ENCODE measurements at regions of chr1 and their contacts with region 1.

Region 1: DNA sequence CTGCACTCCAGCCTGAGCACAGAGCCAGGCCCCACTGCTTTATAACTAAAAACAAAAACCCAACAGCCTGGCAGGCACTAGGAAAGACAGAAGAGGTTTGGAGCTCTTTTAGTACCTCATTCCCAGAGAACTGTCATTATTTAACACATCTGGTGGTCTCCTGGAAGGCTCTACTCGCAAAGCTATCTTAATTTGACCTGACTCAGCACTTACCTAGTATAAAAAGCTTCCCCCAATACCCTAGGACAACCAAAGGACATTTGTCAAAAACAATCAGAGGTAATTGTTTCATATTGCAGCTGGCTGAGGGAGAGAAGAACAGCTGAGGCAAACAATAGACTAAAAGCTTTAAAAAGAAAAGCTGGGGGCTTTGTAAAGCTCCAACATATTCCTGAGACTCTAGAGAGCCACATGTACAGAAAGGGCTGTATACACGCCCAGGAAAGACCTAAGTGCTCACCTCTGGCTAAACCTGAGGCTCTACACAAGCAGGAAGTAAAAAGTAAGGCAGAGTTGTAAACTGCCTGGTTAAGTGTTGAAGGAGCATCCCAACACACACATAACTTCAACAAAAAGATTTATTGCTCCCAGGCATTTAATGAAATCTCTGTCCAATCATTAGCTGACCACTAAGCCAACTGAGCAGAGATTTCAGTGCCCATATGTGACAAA is 25.0 kb downstream of the ZNF644 start:
- DNase-seq: no peak
- H3K4me3 ChIP-seq: no peak overlapping the region
- H3K27ac ChIP-seq: no peak overlapping the region
- H3K4me1 ChIP-seq: peaks cover 0 to 12% (median 3%) of the 10 kb centered on the region in 4 experiments; a peak in 4 of 7 replicates
- H3K27me3 ChIP-seq: no peaks in the 10 kb centered on the region
- CTCF ChIP-seq: no peak
- EP300 ChIP-seq: no peak
- POLR2A ChIP-seq: no peak
- RAD21 ChIP-seq: no peak

Region 2: DNA sequence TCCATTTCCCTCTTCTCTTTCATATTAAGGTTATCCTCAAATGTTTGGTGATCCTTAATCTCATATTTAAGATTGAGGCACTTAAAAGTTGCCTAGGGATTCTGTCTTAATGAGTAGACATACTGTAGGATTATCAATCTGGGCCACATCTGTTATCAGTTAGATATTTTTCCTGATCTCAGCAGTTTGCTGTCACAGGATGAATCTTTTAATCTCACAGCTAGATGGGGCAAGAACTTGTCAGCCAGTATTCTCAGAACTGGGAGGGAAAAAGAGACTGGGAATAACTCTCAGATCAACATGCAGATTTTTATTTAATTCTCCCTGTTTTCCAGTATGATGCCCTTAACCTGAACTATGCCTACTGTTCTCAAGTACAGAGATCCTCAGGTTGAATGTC is 10.9 kb after region 1 on chr1:
- CTCF ChIA-PET with region 1: interaction called, 8 read pairs
- POLR2A ChIA-PET with region 1: interaction called, 12 read pairs
- DNase-seq: no peak
- H3K4me3 ChIP-seq: 0 out of 8 replicates have a peak overlapping the region, but pooled peaks of 1 of the 4 experiments have one; percentile 2
- H3K27ac ChIP-seq: no peak overlapping the region
- H3K4me1 ChIP-seq: peaks cover 0 to 12% (median 7%) of the 10 kb centered on the region in 4 experiments; a peak in 3 of 7 replicates
- H3K27me3 ChIP-seq: no peaks in the 10 kb centered on the region
- CTCF ChIP-seq: no peak
- EP300 ChIP-seq: no peak
- POLR2A ChIP-seq: no peak
- RAD21 ChIP-seq: no peak

Region 3: GRCh38 chr1:91031081-91031480 is 34.2 kb after region 1 on chr1:
- CTCF ChIA-PET with region 1: no interaction called
- POLR2A ChIA-PET with region 1: no interaction called
- DNase-seq: no peak
- H3K4me3 ChIP-seq: no peak overlapping the region
- H3K27ac ChIP-seq: no peak overlapping the region
- H3K4me1 ChIP-seq: no peaks in the 10 kb centered on the region
- H3K27me3 ChIP-seq: peaks cover 0 to 3% (median 1%) of the 10 kb centered on the region in 4 experiments; a peak in 1 of 7 replicates
- CTCF ChIP-seq: no peak
- EP300 ChIP-seq: no peak
- POLR2A ChIP-seq: no peak
- RAD21 ChIP-seq: no peak

Region 4: GRCh38 chr1:91244737-91245136 is 247.9 kb after region 1 on chr1:
- CTCF ChIA-PET with region 1: no interaction called
- POLR2A ChIA-PET with region 1: no interaction called
- DNase-seq: no peak
- H3K4me3 ChIP-seq: no peak overlapping the region
- H3K27ac ChIP-seq: no peak overlapping the region
- H3K4me1 ChIP-seq: no peaks in the 10 kb centered on the region
- H3K27me3 ChIP-seq: no peaks in the 10 kb centered on the region
- CTCF ChIP-seq: no peak
- EP300 ChIP-seq: no peak
- POLR2A ChIP-seq: no peak
- RAD21 ChIP-seq: no peak

Measured in H1 (cell line).